ENCODE measurements at regions of chr16 and their contacts with region 1.

Region 1: GRCh38 chr16:53743149-53743566 is 39.2 kb downstream of the FTO start:
- DNase-seq: peak in 4 of 5 donors; percentile 6 to 19 (median 10)
- H3K4me3 ChIP-seq: no peak overlapping the region
- H3K4me3 Mint-ChIP-seq: peak overlapping the region in 1 of 8 donors; percentile 17
- H3K27ac ChIP-seq: no peak overlapping the region
- H3K27ac Mint-ChIP-seq: no peak overlapping the region
- H3K4me1 ChIP-seq: peaks cover 28% of the 10 kb centered on the region
- H3K4me1 Mint-ChIP-seq: peaks cover 33 to 35% (median 34%) of the 10 kb centered on the region in 4 donors
- H3K27me3 ChIP-seq: no peaks in the 10 kb centered on the region
- H3K27me3 Mint-ChIP-seq: no peaks in the 10 kb centered on the region

Region 2: GRCh38 chr16:52914428-52914827 is 828.7 kb before region 1 on chr16:
- CTCF ChIA-PET with region 1: no interaction called
- POLR2A ChIA-PET with region 1: no interaction called
- intact Hi-C with region 1: no loop called
- DNase-seq: no peak
- H3K4me3 ChIP-seq: no peak overlapping the region
- H3K4me3 Mint-ChIP-seq: no peak overlapping the region
- H3K27ac ChIP-seq: no peak overlapping the region
- H3K27ac Mint-ChIP-seq: no peak overlapping the region
- H3K4me1 ChIP-seq: no peaks in the 10 kb centered on the region
- H3K4me1 Mint-ChIP-seq: peaks cover 0 to 2% (median 0%) of the 10 kb centered on the region in 4 donors
- H3K27me3 ChIP-seq: no peaks in the 10 kb centered on the region
- H3K27me3 Mint-ChIP-seq: peaks cover 2% of the 10 kb centered on the region in 2 donors

Region 3: GRCh38 chr16:53754909-53755535 is 11.9 kb after region 1 on chr16:
- CTCF ChIA-PET with region 1: interaction called, 24 read pairs
- POLR2A ChIA-PET with region 1: no interaction called
- intact Hi-C with region 1: no loop called
- DNase-seq: no peak
- H3K4me3 ChIP-seq: no peak overlapping the region
- H3K4me3 Mint-ChIP-seq: no peak overlapping the region
- H3K27ac ChIP-seq: no peak overlapping the region
- H3K27ac Mint-ChIP-seq: peak overlapping the region in 1 of 7 donors; percentile 43
- H3K4me1 ChIP-seq: no peaks in the 10 kb centered on the region
- H3K4me1 Mint-ChIP-seq: peaks cover 16 to 29% (median 21%) of the 10 kb centered on the region in 4 donors
- H3K27me3 ChIP-seq: no peaks in the 10 kb centered on the region
- H3K27me3 Mint-ChIP-seq: no peaks in the 10 kb centered on the region

Region 4: GRCh38 chr16:53822936-53823529 is 79.9 kb after region 1 on chr16:
- CTCF ChIA-PET with region 1: interaction called, 3 read pairs
- POLR2A ChIA-PET with region 1: no interaction called
- intact Hi-C with region 1: loop called (anchors 1 kb)
- DNase-seq: peak; percentile 62 to 82 (median 77)
- H3K4me3 ChIP-seq: no peak overlapping the region
- H3K4me3 Mint-ChIP-seq: no peak overlapping the region
- H3K27ac ChIP-seq: no peak overlapping the region
- H3K27ac Mint-ChIP-seq: no peak overlapping the region
- H3K4me1 ChIP-seq: peaks cover 13% of the 10 kb centered on the region
- H3K4me1 Mint-ChIP-seq: peaks cover 4 to 16% (median 12%) of the 10 kb centered on the region in 4 donors
- H3K27me3 ChIP-seq: no peaks in the 10 kb centered on the region
- H3K27me3 Mint-ChIP-seq: no peaks in the 10 kb centered on the region

Region 5: DNA sequence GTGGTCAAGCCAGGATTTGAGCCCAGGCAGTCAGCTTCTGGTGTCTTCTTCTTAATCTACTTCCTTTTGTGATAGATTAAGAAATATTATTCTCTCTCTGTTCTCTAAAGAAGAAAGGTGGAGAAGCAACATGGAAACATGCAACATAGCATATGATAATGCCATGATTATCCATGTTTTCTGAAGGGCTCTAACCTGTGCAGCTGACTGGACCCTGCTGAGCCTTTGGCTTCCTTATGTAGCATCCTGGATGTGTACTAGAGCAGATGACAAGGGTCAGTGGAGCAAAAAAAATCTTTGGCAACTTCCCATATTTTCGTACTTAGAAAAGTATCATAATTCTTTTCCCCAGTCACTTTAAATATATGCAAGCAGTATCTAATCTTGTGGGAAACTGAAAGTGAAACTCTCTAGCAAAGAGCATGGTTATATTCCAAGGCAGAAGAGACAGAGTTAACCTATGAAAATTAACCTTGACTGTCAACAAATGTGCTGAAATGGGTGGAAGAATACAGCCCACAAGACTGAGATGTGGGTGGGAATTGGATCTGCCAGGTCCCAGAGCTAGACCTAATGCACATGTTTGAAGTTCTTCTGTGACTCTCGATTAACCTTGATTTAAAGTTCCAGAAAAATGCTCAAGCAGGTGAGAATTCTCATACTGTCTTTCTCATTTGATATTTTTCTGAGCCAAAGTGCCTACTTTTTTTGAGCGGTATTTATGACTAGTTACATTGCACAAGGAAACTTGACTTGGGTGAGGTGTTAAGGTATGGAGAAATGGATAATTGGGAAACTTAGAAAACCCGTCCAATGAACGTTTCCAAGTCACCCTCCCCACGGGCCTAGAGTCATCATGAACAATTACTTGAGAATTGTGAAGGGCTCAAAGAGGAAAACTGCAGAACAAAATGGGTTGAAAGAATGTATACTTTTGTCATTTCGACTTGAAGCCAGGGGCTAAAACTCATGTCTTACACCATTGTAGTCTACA is 209.4 kb after region 1 on chr16:
- CTCF ChIA-PET with region 1: no interaction called
- POLR2A ChIA-PET with region 1: no interaction called
- intact Hi-C with region 1: no loop called
- DNase-seq: peak in 3 of 5 donors; percentile 12 to 24 (median 17)
- H3K4me3 ChIP-seq: peak overlapping the region in 1 of 2 donors; percentile 5
- H3K4me3 Mint-ChIP-seq: peak overlapping the region; percentile 75 to 86 (median 82)
- H3K27ac ChIP-seq: no peak overlapping the region
- H3K27ac Mint-ChIP-seq: peak overlapping the region; percentile 20 to 85 (median 68)
- H3K4me1 ChIP-seq: peaks cover 8% of the 10 kb centered on the region
- H3K4me1 Mint-ChIP-seq: peaks cover 22 to 42% (median 27%) of the 10 kb centered on the region in 4 donors
- H3K27me3 ChIP-seq: no peaks in the 10 kb centered on the region
- H3K27me3 Mint-ChIP-seq: no peaks in the 10 kb centered on the region

Region 6: DNA sequence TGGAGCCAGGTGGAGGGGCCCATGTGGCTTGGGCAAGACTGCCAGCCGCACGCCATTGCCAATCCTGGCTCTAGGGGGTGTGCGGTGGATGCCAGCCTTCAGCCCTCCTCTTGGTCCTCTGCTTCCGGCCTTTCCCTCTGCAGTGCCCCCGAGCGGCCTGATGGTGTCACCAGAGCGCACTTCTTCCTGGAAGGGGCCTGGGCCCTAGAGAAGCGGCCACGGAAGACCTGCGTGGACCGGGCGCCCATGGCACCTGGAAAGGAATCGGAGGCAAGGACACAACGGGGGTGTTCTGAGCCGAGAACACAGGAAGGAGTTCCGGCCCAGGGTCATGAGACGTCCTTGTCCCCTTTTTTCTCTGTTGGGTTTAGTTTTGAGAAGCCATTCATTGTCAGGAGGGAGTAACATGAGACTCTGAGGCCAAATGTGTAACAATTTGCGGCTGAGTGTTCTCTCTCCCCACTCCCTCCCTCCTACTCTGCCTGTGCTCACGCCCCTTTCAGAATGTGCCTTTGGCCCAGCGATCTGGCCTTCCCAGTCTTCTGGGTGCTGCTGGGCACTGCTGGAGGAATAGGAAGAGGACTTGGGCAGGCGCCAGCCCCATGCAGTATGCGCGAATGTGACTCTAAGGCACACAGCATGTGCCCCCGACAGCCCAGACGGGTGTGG is 450.6 kb after region 1 on chr16:
- CTCF ChIA-PET with region 1: no interaction called
- POLR2A ChIA-PET with region 1: no interaction called
- intact Hi-C with region 1: no loop called
- DNase-seq: peak in 1 of 5 donors; percentile 3
- H3K4me3 ChIP-seq: no peak overlapping the region
- H3K4me3 Mint-ChIP-seq: no peak overlapping the region
- H3K27ac ChIP-seq: no peak overlapping the region
- H3K27ac Mint-ChIP-seq: no peak overlapping the region
- H3K4me1 ChIP-seq: no peaks in the 10 kb centered on the region
- H3K4me1 Mint-ChIP-seq: peaks cover 0 to 2% (median 0%) of the 10 kb centered on the region in 4 donors
- H3K27me3 ChIP-seq: no peaks in the 10 kb centered on the region
- H3K27me3 Mint-ChIP-seq: peaks cover 6 to 11% of the 10 kb centered on the region in 2 donors